ACHN (cell line): ENCODE measurements at regions of chr4 and their contacts with region 1.

Region 1: DNA sequence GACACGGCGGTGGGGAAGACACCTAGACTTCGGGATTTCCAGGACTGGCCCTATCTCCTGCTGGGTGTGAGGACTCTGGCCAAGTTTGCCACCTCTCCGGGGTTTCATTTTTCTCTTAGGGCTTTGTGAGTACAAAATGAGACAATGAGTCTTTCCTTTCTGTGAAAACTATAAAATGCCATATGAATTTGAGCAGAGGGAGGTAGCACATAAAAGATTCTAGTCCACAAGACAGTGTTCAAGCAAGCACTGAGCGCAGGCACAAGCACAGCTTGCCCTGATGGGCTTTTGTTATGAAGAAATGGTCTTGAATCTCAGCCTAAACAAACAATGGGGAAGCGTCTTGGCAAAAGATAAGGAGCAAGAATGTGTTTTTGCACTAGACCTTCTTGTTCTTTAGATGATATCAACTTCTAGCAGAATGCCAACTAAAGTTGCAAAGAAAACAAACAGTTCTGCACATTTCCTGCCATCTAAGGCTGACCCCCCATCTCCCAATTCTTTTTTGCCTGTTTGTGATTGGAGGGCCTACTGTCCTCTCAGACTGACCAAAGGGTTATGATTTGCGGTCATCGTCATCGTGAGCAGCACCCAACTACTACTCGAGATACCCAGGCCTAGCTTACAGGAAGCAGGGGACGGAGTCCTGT is 73.0 kb upstream of the ZNF518B start:
- DNase-seq: no peak

Region 2: DNA sequence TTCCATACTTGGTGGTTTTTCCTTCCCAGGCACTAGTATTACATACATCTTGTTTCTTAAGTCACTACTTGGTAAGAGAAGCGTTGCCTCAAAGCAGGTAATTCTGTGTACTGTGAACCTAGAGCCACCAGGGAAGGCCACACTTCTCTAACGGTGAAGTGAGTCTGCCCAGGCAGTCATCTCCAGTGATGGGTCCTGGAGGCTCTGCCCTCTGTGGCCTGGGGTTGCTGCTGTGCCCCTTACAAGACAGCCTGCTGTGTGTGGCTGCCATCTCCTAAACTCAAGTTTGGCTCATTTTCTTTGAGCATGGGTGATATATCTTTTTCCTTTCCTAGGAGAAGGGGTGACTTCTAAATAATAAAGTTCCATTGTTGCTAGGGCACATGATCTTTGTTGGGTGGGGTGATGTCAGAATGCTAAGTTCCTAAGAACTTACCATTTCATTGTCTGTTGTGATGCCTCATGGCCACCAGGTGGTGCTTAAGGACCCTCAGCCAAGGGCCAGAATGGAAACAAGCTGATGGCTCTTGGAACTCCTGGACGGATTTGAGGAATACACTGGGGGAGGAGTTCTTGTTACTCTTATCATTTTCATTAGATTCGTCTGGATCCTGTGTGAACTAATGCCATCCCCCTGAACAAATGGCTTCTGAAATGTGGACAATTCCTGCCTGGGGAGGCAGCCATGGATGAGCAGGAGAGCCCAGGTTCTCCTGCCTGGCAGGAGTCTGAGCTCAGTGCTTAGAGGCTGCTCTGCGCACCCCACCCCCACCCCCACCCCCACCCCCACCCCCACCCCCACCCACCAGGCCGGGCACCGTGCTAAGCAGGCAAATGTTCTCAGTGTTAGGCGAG is 372.6 kb before region 1 on chr4:
- in situ Hi-C with region 1: loop called (anchors 25 kb)
- DNase-seq: peak; percentile 52

Region 3: DNA sequence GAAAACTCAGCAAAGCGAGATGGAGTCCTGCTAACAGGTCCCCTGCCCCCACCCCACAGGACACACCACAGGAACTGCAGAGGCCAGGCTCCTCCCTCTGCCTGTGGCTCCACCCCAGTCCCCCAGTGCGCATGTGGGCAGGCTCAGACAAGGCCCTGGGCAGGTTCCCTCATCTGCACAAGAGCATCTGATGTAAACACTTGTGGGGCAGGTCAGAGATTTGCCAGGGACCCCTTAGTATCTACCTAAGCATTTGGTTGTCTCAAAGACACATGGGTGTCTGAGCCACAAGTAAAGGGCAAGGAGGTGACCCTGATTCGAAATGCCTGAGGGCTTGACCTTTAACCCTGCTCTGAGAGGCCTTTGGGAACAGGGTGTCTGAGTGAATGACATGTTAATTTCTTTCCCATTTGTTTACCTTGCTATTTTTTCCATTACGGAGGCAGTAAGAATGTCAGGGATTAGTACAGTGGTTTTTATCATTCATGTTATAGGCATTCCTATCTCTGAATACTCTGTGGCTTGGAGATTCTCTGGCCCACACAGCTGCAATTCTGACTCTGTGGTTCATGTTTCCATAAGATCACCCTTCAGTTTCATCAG is 158.3 kb before region 1 on chr4:
- in situ Hi-C with region 1: no loop called
- DNase-seq: no peak

Region 4: DNA sequence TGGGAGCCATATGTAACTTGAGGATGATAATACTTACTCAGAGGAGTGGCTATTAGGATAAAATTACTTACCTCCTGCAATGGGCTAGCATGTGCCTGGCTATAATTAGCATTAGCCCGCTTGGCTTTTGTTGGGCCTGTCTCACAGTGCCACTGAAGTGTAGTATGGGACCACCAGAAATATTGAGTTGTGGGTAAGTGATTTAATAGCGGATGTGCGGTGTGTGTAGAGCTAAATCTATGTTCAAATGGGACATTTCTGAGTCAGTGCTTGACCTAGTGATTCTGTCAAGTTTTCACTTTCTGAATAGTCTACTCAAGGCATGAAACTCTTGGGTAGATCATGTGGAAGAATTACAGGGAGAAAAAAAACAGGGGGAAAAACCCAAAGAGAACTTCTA is 157.8 kb after region 1 on chr4:
- in situ Hi-C with region 1: no loop called
- DNase-seq: no peak